Endothelial cell of umbilical vein (primary cell): ENCODE measurements at regions of chr13 and their contacts with region 1.

Region 1: DNA sequence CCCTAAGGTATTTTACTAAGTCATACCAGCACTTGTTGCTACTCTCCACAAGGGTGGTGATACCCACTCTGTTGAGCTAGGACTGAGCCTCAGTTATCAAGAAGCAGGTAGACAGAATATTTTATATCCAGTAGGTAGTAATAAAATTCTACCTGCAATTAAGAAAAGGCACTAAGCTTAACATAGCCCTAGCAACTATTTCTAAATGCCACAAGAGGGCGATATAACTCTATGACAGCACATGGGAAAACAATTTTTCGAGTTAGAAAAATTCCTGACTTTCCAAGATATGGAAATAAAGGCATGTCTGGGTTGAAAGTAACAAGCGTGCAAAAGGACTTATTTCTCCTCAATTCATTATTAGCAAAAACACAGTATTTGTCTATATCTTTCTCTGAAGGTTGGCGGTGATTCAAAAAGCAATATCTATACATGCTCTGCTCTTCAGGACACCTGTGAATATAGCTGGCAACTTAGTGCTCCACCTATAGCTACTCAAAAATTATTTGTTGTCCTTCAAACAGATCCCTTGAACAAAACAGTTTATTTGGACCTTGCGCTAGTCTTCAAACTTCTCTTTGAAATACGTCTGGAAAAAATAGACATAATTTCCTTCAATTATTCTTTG is 14.7 kb downstream of the CCDC169 start:
- DNase-seq: peak; percentile 61
- H3K4me3 ChIP-seq: no peak overlapping the region
- H3K27ac ChIP-seq: no peak overlapping the region
- H3K4me1 ChIP-seq: no peaks in the 10 kb centered on the region
- H3K27me3 ChIP-seq: no peaks in the 10 kb centered on the region
- CTCF ChIP-seq: peak; percentile 52 to 53
- POLR2A ChIP-seq: no peak

Region 2: DNA sequence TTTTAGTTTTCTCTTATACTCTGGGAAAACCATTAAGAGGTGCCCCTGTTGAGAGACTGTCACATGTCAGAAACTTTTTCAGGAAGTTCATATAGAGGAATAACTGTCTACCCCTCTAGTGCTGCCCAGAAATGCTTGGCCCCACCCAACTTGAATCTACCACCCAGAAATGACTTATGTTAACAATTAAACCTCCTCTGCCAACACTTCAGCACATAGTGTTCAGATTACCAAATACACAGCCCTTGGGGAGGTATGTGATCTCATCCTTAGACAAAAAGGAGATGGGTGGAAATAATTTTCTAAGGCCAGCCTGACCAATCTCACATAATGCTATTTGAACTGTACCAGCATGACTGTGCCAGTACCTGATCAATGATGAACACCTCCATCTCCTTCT is 21.0 kb before region 1 on chr13:
- CTCF ChIA-PET with region 1: interaction called, 10 read pairs
- POLR2A ChIA-PET with region 1: no interaction called
- dilution Hi-C with region 1: no loop called
- intact Hi-C with region 1: no loop called
- DNase-seq: no peak
- H3K4me3 ChIP-seq: no peak overlapping the region
- H3K27ac ChIP-seq: no peak overlapping the region
- H3K4me1 ChIP-seq: no peaks in the 10 kb centered on the region
- H3K27me3 ChIP-seq: no peaks in the 10 kb centered on the region
- CTCF ChIP-seq: no peak
- POLR2A ChIP-seq: no peak

Region 3: GRCh38 chr13:36395280-36395679 is 112.3 kb after region 1 on chr13:
- CTCF ChIA-PET with region 1: interaction called, 74 read pairs
- POLR2A ChIA-PET with region 1: no interaction called
- dilution Hi-C with region 1: no loop called
- intact Hi-C with region 1: loop called (anchors 1 kb)
- DNase-seq: peak; percentile 54
- H3K4me3 ChIP-seq: no peak overlapping the region
- H3K27ac ChIP-seq: no peak overlapping the region
- H3K4me1 ChIP-seq: no peaks in the 10 kb centered on the region
- H3K27me3 ChIP-seq: peaks cover 0 to 4% of the 10 kb centered on the region in 2 experiments
- CTCF ChIP-seq: peak in 1 of 2 donors; percentile 34
- POLR2A ChIP-seq: no peak

Region 4: DNA sequence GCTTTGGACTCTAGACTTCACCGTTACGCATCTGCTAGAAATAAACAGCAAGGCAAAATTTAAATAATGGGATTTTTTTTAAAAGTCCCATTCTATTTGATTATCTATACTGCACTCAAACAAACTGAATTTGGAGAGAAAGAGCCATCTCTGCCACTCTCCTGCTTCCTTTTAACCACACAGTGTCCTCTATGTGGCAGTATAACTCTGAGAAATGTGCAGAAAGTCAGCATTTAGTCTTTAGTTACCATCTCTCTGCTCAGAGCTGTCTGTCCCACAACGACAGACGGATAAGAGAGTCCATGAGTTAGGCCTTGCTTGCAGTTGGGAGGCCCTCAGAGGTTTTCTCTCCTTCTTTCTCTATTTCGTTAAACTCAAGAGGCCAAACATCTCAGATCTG is 170.6 kb after region 1 on chr13:
- CTCF ChIA-PET with region 1: interaction called, 19 read pairs
- POLR2A ChIA-PET with region 1: no interaction called
- dilution Hi-C with region 1: no loop called
- intact Hi-C with region 1: loop called (anchors 2 kb)
- DNase-seq: peak; percentile 49
- H3K4me3 ChIP-seq: no peak overlapping the region
- H3K27ac ChIP-seq: no peak overlapping the region
- H3K4me1 ChIP-seq: no peaks in the 10 kb centered on the region
- H3K27me3 ChIP-seq: peaks cover 0 to 4% of the 10 kb centered on the region in 2 experiments
- CTCF ChIP-seq: peak; percentile 29 to 41
- POLR2A ChIP-seq: no peak

Region 5: GRCh38 chr13:36841391-36841790 is 558.5 kb after region 1 on chr13:
- CTCF ChIA-PET with region 1: interaction called, 10 read pairs
- POLR2A ChIA-PET with region 1: no interaction called
- dilution Hi-C with region 1: no loop called
- intact Hi-C with region 1: no loop called
- DNase-seq: no peak
- H3K4me3 ChIP-seq: no peak overlapping the region
- H3K27ac ChIP-seq: no peak overlapping the region
- H3K4me1 ChIP-seq: no peaks in the 10 kb centered on the region
- H3K27me3 ChIP-seq: no peaks in the 10 kb centered on the region
- CTCF ChIP-seq: no peak
- POLR2A ChIP-seq: no peak

Region 6: GRCh38 chr13:37068962-37069361 is 786.0 kb after region 1 on chr13:
- CTCF ChIA-PET with region 1: interaction called, 31 read pairs
- POLR2A ChIA-PET with region 1: no interaction called
- dilution Hi-C with region 1: no loop called
- intact Hi-C with region 1: no loop called
- DNase-seq: peak; percentile 15
- H3K4me3 ChIP-seq: no peak overlapping the region
- H3K27ac ChIP-seq: no peak overlapping the region
- H3K4me1 ChIP-seq: no peaks in the 10 kb centered on the region
- H3K27me3 ChIP-seq: no peaks in the 10 kb centered on the region
- CTCF ChIP-seq: peak; percentile 15 to 25
- POLR2A ChIP-seq: no peak